ENCODE measurements at regions of chr10 and their contacts with region 1.

Region 1: DNA sequence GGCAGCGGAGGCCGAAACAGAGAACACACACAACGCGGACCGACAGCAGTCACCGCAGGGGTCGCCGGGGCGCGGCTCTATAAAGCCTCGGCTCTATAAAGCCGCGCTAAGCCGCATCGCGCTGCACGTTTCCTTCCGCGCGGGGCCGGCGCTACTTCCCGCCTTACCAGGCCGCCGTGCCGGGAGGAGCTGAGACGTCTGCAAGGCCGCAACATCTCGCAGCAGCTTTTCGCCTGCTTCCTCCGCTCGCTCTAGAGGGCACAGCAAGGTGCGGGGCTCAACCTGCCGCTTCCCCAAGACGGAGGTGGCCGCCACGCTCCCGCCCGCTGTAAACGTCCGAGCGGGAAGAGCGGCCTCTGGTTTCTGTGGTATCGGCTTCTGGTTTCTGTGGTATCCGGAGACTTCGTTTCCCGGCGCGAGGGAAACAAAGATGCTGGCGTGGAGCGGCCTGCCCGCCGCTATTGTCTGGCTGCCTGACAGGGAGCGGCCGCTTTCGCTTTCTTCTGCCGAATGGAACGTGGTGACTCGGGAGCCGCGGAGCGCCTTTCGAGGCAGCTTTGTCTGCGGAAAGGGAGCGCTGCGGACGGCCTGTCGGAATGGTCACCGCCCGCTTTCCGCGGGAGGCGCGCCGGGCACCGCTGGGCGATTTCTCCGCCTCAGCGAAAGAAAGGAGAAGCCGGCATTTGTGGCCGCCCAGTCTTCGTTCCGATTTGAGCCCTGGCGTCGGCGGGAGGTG is 91.8 kb downstream of the SPAG6 start:
- DNase-seq: peak; percentile 84
- H3K4me3 Mint-ChIP-seq: peak overlapping the region; percentile 84
- H3K27ac Mint-ChIP-seq: peak overlapping the region; percentile 92
- H3K4me1 Mint-ChIP-seq: peaks cover 31% of the 10 kb centered on the region
- H3K27me3 Mint-ChIP-seq: no peaks in the 10 kb centered on the region

Region 2: GRCh38 chr10:21516242-21517131 is 920.6 kb before region 1 on chr10:
- CTCF ChIA-PET with region 1: no interaction called
- intact Hi-C with region 1: loop called (anchors 5 kb)
- DNase-seq: peak; percentile 58
- H3K4me3 Mint-ChIP-seq: peak overlapping the region; percentile 70
- H3K27ac Mint-ChIP-seq: no peak overlapping the region
- H3K4me1 Mint-ChIP-seq: peaks cover 36% of the 10 kb centered on the region
- H3K27me3 Mint-ChIP-seq: peaks cover 76% of the 10 kb centered on the region

Region 3: GRCh38 chr10:22244001-22244400 is 193.1 kb before region 1 on chr10:
- CTCF ChIA-PET with region 1: no interaction called
- intact Hi-C with region 1: loop called (anchors 2 kb)
- DNase-seq: no peak
- H3K4me3 Mint-ChIP-seq: no peak overlapping the region
- H3K27ac Mint-ChIP-seq: no peak overlapping the region
- H3K4me1 Mint-ChIP-seq: peaks cover 40% of the 10 kb centered on the region
- H3K27me3 Mint-ChIP-seq: no peaks in the 10 kb centered on the region

Region 4: DNA sequence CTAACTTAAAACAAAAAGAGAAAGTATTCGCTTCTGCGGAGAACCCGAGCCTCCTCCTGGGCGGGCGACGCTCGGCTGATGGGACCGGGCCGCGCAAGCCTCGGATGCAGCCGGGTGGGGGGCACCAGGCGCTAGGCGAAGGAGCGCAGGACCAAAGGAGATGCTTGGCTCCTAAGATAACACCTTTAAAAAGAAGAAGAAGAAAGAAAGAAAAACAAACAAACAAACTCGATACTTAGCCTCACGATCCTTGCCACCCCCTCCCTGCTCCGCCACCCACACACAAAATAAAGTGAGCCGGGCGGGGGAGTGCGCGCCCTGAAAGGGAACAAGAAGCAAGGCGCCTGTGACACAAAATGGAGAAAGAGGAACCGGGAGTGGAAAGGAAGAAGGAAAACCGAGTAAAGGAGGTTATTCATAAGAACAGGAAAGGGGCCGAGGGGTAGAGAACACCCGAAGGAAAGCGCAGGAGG is 185.3 kb before region 1 on chr10:
- CTCF ChIA-PET with region 1: no interaction called
- intact Hi-C with region 1: loop called (anchors 1 kb)
- DNase-seq: peak; percentile 74
- H3K4me3 Mint-ChIP-seq: peak overlapping the region; percentile 99
- H3K27ac Mint-ChIP-seq: peak overlapping the region; percentile 99
- H3K4me1 Mint-ChIP-seq: peaks cover 34% of the 10 kb centered on the region
- H3K27me3 Mint-ChIP-seq: peaks cover 5% of the 10 kb centered on the region

Region 5: DNA sequence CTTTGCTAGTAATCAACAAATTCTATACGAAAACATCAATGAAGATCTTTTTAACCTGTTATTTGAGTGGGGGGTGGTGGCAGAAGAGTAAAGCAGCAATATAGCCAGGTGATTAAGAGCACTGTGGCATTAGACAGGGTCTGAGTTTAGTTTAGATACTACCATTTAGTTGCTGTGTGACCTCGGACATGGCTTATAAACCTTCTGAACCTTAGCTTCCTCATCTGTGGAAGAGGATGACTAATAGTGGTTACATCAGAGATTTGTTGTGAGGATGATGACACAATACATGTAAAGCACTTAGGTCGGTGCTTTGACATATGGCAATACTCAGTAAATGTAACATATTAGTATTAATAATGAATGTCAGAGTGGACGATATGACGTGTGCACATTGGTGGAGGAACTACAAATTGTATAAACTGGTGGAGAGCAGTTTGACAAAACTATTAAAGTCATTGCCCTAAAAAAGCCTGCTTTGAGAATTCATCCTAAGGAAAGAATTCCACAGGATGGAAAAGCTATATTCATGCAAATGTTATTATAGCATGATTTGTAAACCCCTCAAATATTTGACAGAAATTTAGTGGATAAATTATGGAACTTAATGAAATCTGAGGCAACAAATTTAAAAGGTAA is 67.5 kb before region 1 on chr10:
- CTCF ChIA-PET with region 1: no interaction called
- intact Hi-C with region 1: loop called (anchors 5 kb)
- DNase-seq: no peak
- H3K4me3 Mint-ChIP-seq: no peak overlapping the region
- H3K27ac Mint-ChIP-seq: no peak overlapping the region
- H3K4me1 Mint-ChIP-seq: peaks cover 27% of the 10 kb centered on the region
- H3K27me3 Mint-ChIP-seq: peaks cover 2% of the 10 kb centered on the region

Region 6: DNA sequence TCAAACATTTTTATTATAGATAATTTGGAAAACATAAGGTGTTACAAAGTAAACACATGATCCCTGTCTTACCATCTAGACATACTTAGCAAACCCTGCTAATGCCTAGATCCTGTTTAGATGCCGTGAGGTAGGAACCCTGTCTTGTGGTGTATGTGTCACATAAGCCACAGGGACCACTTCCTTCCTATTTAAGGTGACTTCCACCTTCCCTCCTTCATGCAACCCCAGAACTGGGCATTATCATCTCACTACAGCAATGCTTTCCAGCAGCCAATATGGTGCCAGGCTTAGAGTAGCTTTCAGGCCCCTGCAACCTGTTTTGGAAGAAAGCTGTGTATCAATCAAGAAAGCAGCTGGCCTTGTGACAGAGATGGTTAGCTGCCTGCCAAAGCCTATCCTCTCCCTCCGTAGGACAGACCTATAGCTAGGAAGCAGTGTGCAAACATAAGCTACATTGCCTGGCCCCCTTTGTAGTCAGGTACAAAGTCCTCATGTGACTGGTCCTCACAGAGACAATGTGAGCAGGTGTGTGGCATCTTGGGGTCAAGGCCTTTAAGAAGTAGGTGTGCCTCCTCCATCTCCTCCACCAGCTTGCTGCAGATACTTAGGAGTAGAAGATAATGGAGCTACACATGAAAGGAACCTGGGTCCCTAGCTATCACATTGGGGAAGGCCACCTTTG is 55.0 kb after region 1 on chr10:
- CTCF ChIA-PET with region 1: no interaction called
- intact Hi-C with region 1: no loop called
- DNase-seq: peak; percentile 41
- H3K4me3 Mint-ChIP-seq: no peak overlapping the region
- H3K27ac Mint-ChIP-seq: no peak overlapping the region
- H3K4me1 Mint-ChIP-seq: peaks cover 10% of the 10 kb centered on the region
- H3K27me3 Mint-ChIP-seq: peaks cover 3% of the 10 kb centered on the region

Region 7: GRCh38 chr10:22655311-22655981 is 218.4 kb after region 1 on chr10:
- CTCF ChIA-PET with region 1: no interaction called
- intact Hi-C with region 1: loop called (anchors 5 kb)
- DNase-seq: peak; percentile 69
- H3K4me3 Mint-ChIP-seq: peak overlapping the region; percentile 46
- H3K27ac Mint-ChIP-seq: peak overlapping the region; percentile 89
- H3K4me1 Mint-ChIP-seq: peaks cover 99% of the 10 kb centered on the region
- H3K27me3 Mint-ChIP-seq: no peaks in the 10 kb centered on the region

Measured in activated naive CD4-positive, alpha-beta T cell treated with anti-CD3 and anti-CD28 coated beads for 36 hours (primary cell).